GM13976 (cell line): ENCODE measurements at regions of chr1 and their contacts with region 1.

Region 1: GRCh38 chr1:247373721-247374141 is 42.1 kb upstream of the ZNF496 start:
- DNase-seq: peak; percentile 52
- CTCF ChIP-seq: no peak

Region 2: GRCh38 chr1:247054992-247055415 is 318.7 kb before region 1 on chr1:
- in situ Hi-C with region 1: no loop called
- DNase-seq: no peak
- CTCF ChIP-seq: no peak

Region 3: DNA sequence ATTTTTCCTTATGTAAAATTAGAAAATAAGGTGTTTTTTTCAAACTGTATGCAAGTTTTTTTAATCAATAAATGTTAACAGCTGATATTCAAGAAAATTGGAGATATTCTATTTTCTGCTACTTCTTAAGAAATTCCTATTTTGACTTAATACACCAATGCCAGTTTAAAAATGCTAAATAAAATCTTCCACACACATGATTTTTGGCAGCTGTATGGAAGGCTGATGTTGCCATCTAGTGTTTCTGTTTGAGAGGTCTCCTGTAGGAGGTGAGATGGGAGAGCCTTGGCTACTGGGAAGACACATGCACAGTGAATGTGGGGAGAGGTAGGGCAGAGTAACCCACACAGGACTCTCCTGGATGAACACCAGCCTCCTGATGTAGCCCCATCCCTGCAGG is 113.3 kb after region 1 on chr1:
- in situ Hi-C with region 1: loop called (anchors 10 kb)
- DNase-seq: peak; percentile 72
- CTCF ChIP-seq: peak; percentile 52